ENCODE measurements at regions of chr14 and their contacts with region 1.

Region 1: DNA sequence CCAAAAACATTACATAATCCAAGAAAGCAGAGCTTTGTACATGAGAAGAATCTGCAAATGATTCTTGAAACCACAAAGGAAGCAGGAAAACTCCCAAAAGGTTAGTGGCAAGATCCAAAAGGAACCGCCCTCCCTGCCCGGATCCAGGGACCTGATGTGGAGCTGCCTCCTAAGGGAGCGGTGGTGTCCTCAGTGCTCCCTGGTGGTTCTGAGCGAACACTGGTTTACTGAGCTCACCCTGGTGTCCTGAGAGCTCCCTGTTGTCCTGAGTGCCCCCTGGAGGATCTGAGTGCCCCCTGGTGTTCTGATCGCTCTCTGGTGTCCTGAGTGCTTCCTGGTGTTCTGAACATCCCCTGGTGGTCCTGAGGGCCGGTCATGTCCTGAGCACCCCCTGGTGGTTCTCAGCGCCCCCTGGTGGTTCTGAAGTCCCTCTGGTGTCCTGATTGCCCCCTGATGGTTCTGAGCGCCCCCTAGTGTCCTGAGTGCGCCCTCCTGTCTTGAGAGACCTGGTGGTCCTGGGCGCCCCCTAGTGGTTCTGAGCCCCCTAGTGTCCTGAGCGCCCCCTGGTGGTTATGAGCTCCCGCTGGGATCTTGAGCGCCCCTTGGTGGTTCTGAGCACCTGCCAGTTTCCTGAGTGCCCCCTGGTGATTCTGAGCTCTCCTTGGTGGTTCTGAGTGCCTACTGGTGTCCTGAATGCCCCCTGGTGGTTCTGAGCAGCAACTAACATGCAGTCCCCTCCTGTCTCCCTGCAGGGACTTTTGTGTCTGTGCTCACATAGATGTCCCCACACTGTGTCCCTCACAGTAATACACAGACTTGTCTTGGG is 891.1 kb downstream of the TMEM121 start:
- DNase-seq: peak; percentile 75
- CTCF ChIP-seq: peak; percentile 100

Region 2: DNA sequence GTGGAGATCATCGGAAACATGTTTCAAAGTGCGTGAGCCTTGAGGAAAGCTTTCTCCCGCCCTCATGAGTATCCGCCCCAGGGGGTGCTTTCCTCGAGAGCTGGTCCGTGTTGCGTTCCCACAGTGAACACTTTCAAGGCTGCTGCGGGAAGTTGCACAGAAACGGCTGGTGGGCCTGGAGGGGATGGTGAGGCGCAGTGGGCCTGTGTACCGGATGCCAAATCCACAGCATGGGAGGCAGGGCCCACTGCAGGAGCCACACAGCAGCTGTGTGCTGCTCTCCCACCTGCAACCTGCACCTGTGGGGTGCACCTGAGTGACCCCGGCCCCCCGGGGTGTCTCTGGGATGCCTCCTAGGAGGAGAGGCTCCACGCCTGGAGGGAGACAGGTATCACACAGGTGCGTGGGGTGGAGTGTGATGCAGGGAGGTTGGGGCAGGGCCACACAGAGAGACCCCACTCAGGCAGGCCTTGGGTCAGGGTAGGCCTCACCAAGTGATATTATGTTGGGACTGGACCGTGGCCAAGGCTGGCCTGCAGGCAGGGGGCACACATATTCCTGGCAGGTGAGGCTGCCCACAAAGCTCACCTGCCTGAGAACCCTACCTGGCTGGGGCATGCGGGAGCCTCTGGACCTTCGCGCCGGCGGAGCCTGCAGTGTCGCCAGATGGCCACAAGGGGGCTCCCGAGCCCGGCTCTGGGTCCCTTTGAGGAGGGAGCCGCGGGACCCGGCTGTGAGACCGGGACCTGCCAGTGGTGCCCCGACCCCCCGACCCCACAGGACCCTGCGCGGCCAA is 879.9 kb before region 1 on chr14:
- CTCF ChIA-PET with region 1: interaction called, 58 read pairs
- POLR2A ChIA-PET with region 1: no interaction called
- DNase-seq: peak; percentile 90
- CTCF ChIP-seq: peak; percentile 96

Region 3: DNA sequence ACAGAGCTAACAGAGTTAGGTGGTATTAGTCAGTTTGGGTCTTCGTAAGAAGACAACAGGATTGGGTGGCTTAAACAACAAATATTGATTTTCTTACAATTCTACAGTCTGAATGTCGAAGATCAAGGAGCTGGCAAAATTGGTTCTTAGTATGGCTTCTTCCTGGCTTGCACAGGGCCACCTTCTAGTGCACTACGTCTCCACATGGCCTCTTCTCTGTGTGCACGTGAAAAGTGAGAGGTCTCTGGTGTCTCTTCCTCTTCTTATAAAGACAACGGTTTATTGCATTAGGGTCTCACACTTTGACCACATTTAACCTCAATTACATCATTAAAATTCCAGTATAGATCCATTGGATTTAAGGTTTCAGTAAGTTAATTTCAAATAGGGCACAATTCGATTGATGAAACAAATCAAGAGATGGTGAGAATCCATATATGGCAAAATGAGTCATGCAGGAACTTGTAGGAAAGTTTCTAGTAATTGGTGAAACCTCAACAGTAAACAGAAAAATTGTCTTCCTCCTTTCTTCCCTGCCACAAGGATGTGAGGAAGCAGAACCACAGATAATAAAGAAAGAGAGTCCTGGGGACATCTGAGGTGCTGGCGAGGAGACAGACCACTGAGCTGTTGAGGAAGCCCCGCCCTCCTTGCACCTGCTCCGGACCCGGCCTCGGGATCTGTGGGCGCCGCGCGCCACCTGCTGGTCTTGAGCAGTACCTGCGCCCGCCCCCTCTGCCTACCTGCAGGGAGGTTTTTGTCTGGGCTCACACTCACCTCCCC is 44.4 kb before region 1 on chr14:
- CTCF ChIA-PET with region 1: interaction called, 185 read pairs
- POLR2A ChIA-PET with region 1: no interaction called
- DNase-seq: peak; percentile 76
- CTCF ChIP-seq: peak; percentile 99

Region 4: GRCh38 chr14:106455026-106455425 is 37.6 kb after region 1 on chr14:
- CTCF ChIA-PET with region 1: interaction called, 14 read pairs
- POLR2A ChIA-PET with region 1: no interaction called
- DNase-seq: no peak
- CTCF ChIP-seq: no peak

Region 5: GRCh38 chr14:106518054-106518943 is 100.9 kb after region 1 on chr14:
- CTCF ChIA-PET with region 1: interaction called, 25 read pairs
- POLR2A ChIA-PET with region 1: no interaction called
- DNase-seq: peak; percentile 29
- CTCF ChIP-seq: peak; percentile 80

Region 6: GRCh38 chr14:106586098-106586704 is 168.8 kb after region 1 on chr14:
- CTCF ChIA-PET with region 1: interaction called, 14 read pairs
- POLR2A ChIA-PET with region 1: no interaction called
- DNase-seq: peak; percentile 75
- CTCF ChIP-seq: peak; percentile 85

Measured in GM10248 (cell line).